Mucosa of descending colon (tissue), 3 donors: ENCODE measurements at regions of chr6 and their contacts with region 1.

Region 1: DNA sequence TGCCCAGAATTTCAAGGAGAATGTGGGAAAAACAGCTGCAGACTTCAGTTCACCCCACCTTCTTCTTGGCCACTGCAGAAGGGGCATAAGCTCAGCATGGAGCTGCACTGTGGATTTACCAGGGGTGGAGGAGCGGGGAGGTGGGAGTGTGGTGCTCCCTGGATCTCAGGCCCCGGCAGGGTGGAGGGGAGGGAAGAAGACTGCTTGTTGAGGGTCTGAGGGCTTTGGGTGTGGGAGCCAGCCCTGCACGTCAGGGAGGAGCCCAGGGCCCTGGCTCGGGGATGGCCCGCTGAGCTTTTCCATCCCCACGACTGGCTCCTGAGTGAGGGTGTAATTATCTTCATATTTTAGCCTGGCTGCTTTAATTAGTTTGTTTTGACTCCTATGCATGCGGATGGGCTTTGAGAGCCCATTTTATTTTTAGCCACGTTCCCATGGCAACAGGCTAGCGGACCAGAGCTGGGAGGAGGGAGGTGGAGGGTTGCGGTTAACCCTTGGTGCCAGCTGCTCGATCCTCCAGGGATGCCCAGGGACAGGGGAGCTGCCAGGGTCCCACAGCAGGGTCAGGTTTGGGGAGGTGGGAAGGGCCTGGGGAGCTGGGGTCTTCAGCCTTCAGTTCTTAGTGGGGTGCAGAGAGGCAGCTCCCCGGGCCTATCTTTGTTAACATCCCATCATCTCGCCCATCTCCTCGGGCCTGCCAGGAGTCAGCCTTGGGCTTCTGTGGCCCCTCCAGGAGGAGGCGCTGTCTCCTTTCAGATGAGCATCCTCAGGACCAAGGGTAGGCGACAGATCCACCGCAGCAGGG is 68.2 kb downstream of the RAB44 start:
- DNase-seq: peak; percentile 81 to 90 (median 87)
- ATAC-seq: peak; percentile 91
- H3K4me3 ChIP-seq: no peak overlapping the region
- H3K4me1 ChIP-seq: no peaks in the 10 kb centered on the region
- CTCF ChIP-seq: peak; percentile 72

Region 2: DNA sequence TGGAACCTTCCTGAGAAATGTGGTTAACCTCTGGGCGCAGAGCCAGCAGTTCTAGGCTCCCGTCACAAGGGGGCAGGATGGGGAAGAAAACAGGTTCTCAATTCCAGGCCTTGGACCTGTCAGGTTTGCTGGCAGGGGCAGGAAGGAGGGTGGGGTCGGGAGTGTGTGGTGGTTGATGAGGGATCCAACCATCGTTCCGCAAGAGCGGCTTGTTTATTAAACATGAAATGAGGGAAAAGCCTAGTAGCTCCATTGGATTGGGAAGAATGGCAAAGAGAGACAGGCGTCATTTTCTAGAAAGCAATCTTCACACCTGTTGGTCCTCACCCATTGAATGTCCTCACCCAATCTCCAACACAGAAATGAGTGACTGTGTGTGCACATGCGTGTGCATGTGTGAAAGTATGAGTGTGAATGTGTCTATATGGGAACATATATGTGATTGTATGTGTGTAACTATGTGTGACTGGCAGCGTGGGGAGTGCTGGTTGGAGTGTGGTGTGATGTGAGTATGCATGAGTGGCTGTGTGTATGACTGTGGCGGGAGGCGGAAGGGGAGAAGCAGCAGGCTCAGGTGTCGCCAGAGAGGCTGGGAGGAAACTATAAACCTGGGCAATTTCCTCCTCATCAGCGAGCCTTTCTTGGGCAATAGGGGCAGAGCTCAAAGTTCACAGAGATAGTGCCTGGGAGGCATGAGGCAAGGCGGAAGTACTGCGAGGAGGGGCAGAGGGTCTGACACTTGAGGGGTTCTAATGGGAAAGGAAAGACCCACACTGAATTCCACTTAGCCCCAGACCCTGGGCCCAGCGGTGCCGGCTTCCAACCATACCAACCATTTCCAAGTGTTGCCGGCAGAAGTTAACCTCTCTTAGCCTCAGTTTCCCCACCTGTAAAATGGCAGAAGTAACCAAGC is 142.0 kb before region 1 on chr6:
- intact Hi-C with region 1: loop called in 1 of 2 experiments (anchors 10 kb)
- DNase-seq: peak; percentile 88 to 97 (median 94)
- ATAC-seq: peak; percentile 89
- H3K4me3 ChIP-seq: no peak overlapping the region
- H3K4me1 ChIP-seq: peaks cover 40% of the 10 kb centered on the region
- CTCF ChIP-seq: peak; percentile 89

Region 3: DNA sequence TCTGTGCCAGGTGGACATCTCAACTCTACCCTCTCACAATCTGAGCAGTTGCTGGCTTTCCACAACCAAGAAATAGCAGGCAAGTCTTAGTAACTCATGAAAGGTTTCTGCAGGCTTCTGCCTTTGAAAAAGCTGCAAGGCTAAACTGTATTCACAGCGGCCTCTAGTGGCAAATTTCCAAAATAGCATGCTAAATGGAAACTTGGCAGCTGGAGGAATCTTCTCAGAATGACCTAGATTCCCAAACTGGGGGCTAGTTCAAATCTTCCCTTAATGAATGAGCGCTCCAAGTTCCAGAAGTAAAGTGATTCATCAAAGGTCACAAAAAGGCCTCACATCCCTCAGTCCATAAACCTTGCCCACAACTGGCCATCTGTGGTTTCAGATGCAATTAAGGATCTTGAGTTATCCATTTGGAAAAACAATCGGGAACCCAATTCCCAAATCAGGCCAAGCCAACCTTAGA is 85.4 kb after region 1 on chr6:
- intact Hi-C with region 1: loop called (anchors 5 to 10 kb)
- DNase-seq: peak in 1 of 3 donors; percentile 60
- ATAC-seq: peak; percentile 49
- H3K4me3 ChIP-seq: no peak overlapping the region
- H3K4me1 ChIP-seq: peaks cover 5% of the 10 kb centered on the region
- CTCF ChIP-seq: peak; percentile 43